ENCODE measurements at regions of chr17 and their contacts with region 1.

Region 1: GRCh38 chr17:55527540-55528118 is 16.4 kb upstream of the SMIM36 start:
- DNase-seq: peak in 3 of 14 experiments; percentile 8 to 15 (median 15)
- ATAC-seq: no peak
- H3K4me3 ChIP-seq: no peak overlapping the region
- H3K4me3 Mint-ChIP-seq: no peak overlapping the region
- H3K27ac ChIP-seq: no peak overlapping the region
- H3K27ac Mint-ChIP-seq: no peak overlapping the region
- H3K4me1 ChIP-seq: no peaks in the 10 kb centered on the region
- H3K4me1 Mint-ChIP-seq: no peaks in the 10 kb centered on the region
- H3K27me3 ChIP-seq: no peaks in the 10 kb centered on the region
- H3K27me3 Mint-ChIP-seq: peaks cover 5% of the 10 kb centered on the region
- CTCF ChIP-seq: no peak

Region 2: GRCh38 chr17:55433629-55434305 is 93.9 kb before region 1 on chr17:
- CTCF ChIA-PET with region 1: no interaction called
- POLR2A ChIA-PET with region 1: no interaction called
- intact Hi-C with region 1: no loop called
- DNase-seq: no peak
- ATAC-seq: no peak
- H3K4me3 ChIP-seq: no peak overlapping the region
- H3K4me3 Mint-ChIP-seq: no peak overlapping the region
- H3K27ac ChIP-seq: no peak overlapping the region
- H3K27ac Mint-ChIP-seq: no peak overlapping the region
- H3K4me1 ChIP-seq: peaks cover 3% of the 10 kb centered on the region
- H3K4me1 Mint-ChIP-seq: peaks cover 11% of the 10 kb centered on the region
- H3K27me3 ChIP-seq: no peaks in the 10 kb centered on the region
- H3K27me3 Mint-ChIP-seq: no peaks in the 10 kb centered on the region
- CTCF ChIP-seq: no peak

Region 3: GRCh38 chr17:55564081-55564480 is 36.5 kb after region 1 on chr17:
- CTCF ChIA-PET with region 1: no interaction called
- POLR2A ChIA-PET with region 1: no interaction called
- intact Hi-C with region 1: no loop called
- DNase-seq: no peak
- ATAC-seq: no peak
- H3K4me3 ChIP-seq: no peak overlapping the region
- H3K4me3 Mint-ChIP-seq: no peak overlapping the region
- H3K27ac ChIP-seq: no peak overlapping the region
- H3K27ac Mint-ChIP-seq: no peak overlapping the region
- H3K4me1 ChIP-seq: no peaks in the 10 kb centered on the region
- H3K4me1 Mint-ChIP-seq: no peaks in the 10 kb centered on the region
- H3K27me3 ChIP-seq: no peaks in the 10 kb centered on the region
- H3K27me3 Mint-ChIP-seq: peaks cover 13% of the 10 kb centered on the region
- CTCF ChIP-seq: no peak

Region 4: DNA sequence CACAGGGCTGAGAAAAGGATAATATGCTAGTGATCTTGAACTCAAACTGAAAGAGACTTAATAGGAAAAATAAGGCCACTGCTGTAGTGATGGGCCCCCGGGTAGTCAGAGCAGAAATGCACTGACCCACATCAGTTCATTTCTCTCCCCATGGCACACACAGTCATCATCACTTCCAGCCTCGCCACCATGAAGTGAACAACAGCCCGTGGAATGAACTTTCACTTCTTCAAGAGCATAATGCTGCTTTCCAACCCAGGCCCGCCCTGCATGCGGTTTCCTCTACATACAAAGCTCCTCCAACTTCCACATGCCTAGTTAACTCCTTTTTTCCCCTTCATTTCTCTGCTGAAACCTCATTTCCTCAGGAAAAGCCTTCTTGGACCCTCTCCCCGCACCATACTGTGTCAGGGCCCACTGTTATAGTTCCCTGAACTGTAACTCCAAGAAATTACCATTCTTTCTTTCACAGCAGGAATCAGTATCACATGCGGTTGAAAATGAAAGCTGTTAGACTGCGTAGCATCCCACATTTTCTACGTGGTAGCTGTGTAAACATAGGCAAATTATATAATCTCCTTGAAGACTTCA is 49.5 kb after region 1 on chr17:
- CTCF ChIA-PET with region 1: interaction called, 5 read pairs
- POLR2A ChIA-PET with region 1: interaction called, 3 read pairs
- intact Hi-C with region 1: loop called in 1 of 2 experiments (anchors 10 kb)
- DNase-seq: peak; percentile 5 to 74 (median 32)
- ATAC-seq: peak; percentile 82
- H3K4me3 ChIP-seq: peak overlapping the region; percentile 56
- H3K4me3 Mint-ChIP-seq: no peak overlapping the region
- H3K27ac ChIP-seq: peak overlapping the region; percentile 42 to 71
- H3K27ac Mint-ChIP-seq: no peak overlapping the region
- H3K4me1 ChIP-seq: peaks cover 26% of the 10 kb centered on the region
- H3K4me1 Mint-ChIP-seq: peaks cover 6% of the 10 kb centered on the region
- H3K27me3 ChIP-seq: no peaks in the 10 kb centered on the region
- H3K27me3 Mint-ChIP-seq: no peaks in the 10 kb centered on the region
- CTCF ChIP-seq: no peak

Region 5: DNA sequence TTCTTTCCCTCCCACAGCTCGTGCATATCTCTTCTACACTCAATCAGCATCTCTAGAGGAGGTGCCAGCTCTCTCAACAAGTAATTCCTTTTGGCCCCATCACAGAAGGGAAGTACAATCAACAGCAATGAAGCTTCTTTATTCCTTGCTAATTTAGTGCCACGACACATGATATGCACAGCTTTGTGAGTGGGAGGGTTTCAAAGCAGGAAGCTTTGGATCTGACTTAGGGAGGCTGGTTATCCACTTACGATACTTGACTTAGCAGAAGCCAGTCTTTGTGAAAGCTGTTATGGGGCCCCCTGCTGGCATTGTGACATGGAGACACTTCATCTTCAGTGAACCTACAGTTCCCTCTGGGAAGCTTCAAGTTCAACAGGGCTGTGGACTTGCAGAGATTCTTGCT is 114.0 kb after region 1 on chr17:
- CTCF ChIA-PET with region 1: interaction called, 5 read pairs
- POLR2A ChIA-PET with region 1: no interaction called
- intact Hi-C with region 1: loop called in 1 of 2 experiments (anchors 5 kb)
- DNase-seq: peak in 10 of 14 experiments; percentile 1 to 54 (median 22)
- ATAC-seq: no peak
- H3K4me3 ChIP-seq: no peak overlapping the region
- H3K4me3 Mint-ChIP-seq: no peak overlapping the region
- H3K27ac ChIP-seq: no peak overlapping the region
- H3K27ac Mint-ChIP-seq: no peak overlapping the region
- H3K4me1 ChIP-seq: peaks cover 3% of the 10 kb centered on the region
- H3K4me1 Mint-ChIP-seq: no peaks in the 10 kb centered on the region
- H3K27me3 ChIP-seq: peaks cover 0 to 6% of the 10 kb centered on the region in 2 experiments
- H3K27me3 Mint-ChIP-seq: peaks cover 17% of the 10 kb centered on the region
- CTCF ChIP-seq: peak; percentile 35

Region 6: DNA sequence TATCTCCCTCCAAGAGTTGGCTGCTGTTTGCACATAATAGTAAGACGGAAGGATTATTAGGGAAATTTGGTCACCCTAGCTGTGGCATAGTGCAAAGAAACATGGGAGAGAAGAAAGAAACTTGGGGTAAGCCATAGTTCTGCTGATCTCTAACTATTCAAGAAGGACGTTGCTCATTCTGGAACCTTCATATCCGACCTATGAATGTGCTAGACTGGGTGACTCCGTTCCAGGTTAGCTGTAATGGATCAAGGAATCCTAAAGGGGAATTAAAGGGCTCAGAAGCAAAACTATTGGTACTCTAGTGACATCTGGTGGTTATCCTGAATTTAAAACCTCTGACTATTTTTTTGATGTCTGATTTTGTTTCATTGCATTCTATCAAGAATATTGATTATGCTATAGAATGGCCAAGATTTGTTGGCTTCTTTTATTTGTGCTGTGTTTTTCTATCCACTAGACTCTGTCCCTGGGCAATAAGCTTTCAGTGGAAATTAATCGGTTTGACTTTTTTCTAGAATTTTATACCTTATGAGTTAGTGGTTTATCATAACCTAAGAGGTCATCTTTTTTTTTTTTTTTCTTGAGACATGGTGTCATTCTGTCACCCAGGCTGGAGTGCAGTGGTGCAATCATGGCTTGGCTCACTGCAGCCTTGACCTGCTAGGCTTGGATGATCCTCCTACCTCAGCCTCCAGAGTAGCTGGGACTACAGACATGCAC is 242.7 kb after region 1 on chr17:
- CTCF ChIA-PET with region 1: interaction called, 7 read pairs
- POLR2A ChIA-PET with region 1: no interaction called
- intact Hi-C with region 1: loop called (anchors 1 to 2 kb)
- DNase-seq: peak in 2 of 14 experiments; percentile 16 to 28
- ATAC-seq: no peak
- H3K4me3 ChIP-seq: no peak overlapping the region
- H3K4me3 Mint-ChIP-seq: no peak overlapping the region
- H3K27ac ChIP-seq: no peak overlapping the region
- H3K27ac Mint-ChIP-seq: no peak overlapping the region
- H3K4me1 ChIP-seq: no peaks in the 10 kb centered on the region
- H3K4me1 Mint-ChIP-seq: no peaks in the 10 kb centered on the region
- H3K27me3 ChIP-seq: no peaks in the 10 kb centered on the region
- H3K27me3 Mint-ChIP-seq: no peaks in the 10 kb centered on the region
- CTCF ChIP-seq: no peak

Region 7: DNA sequence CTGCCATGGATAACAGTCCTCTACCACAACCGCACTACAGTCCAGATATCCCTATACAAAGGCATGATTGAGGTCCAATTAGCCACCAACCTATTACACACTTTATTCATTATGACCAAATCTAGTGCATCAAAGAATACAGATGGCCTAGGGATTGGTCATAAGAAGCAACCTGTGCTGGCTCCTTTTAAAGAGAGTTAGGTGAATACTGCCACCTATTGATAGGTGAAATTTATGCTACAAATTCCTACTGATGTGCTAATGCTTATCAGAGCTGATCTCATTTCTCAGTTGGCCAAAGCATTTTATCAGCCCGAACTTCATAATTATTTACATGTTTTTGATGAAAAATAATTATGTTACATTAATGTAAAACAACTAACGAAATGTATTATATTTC is 791.9 kb after region 1 on chr17:
- CTCF ChIA-PET with region 1: no interaction called
- POLR2A ChIA-PET with region 1: no interaction called
- intact Hi-C with region 1: loop called in 1 of 2 experiments (anchors 10 kb)
- DNase-seq: peak in 3 of 14 experiments; percentile 14 to 21 (median 16)
- ATAC-seq: no peak
- H3K4me3 ChIP-seq: no peak overlapping the region
- H3K4me3 Mint-ChIP-seq: no peak overlapping the region
- H3K27ac ChIP-seq: no peak overlapping the region
- H3K27ac Mint-ChIP-seq: no peak overlapping the region
- H3K4me1 ChIP-seq: no peaks in the 10 kb centered on the region
- H3K4me1 Mint-ChIP-seq: no peaks in the 10 kb centered on the region
- H3K27me3 ChIP-seq: no peaks in the 10 kb centered on the region
- H3K27me3 Mint-ChIP-seq: peaks cover 11% of the 10 kb centered on the region
- CTCF ChIP-seq: peak; percentile 21

Region 8: DNA sequence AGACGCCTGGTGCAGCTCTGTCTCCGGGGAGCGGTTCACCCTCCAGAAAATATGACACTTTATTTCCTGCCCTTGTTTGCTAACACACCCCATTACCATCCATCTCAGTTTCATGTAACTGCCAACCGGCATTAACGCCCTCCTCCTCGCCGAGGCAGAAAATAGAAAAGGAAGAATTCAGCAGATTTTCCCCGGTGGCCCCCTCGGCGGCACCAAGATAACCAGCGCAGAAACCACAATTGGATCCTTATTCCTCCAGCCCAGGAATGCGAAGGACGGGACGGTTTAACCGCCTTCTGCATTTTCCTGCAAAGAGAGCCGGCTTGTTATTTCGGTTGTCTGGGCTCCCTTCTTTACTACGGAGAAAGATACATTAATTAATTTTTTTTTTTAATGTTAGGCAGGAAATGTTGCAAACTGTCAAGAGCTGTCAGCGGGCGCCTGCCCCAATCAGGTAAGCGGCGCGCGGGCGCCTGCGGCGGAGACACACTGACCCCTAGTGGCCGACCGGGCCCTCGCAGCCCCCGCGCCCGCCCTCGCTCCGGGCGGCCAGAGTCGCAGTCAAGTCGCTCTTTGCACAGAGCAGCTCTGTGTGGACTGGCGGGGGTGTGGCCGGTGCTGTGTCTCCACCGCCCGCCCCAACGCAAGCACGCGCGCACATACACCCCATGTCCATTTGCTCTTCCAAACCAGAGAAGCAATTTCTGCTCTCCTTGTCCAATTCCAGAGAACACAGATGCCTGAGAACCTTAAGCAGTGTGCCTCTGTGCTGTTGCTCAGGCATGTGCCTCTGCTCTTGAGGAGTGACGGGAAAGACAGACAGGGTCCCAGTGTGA is 1252.5 kb after region 1 on chr17:
- CTCF ChIA-PET with region 1: interaction called, 7 read pairs
- POLR2A ChIA-PET with region 1: no interaction called
- intact Hi-C with region 1: loop called in 1 of 2 experiments (anchors 5 kb)
- DNase-seq: peak; percentile 75 to 93 (median 85)
- ATAC-seq: peak; percentile 95
- H3K4me3 ChIP-seq: peak overlapping the region; percentile 64
- H3K4me3 Mint-ChIP-seq: peak overlapping the region; percentile 90
- H3K27ac ChIP-seq: peak overlapping the region; percentile 71 to 77
- H3K27ac Mint-ChIP-seq: peak overlapping the region; percentile 97
- H3K4me1 ChIP-seq: peaks cover 22% of the 10 kb centered on the region
- H3K4me1 Mint-ChIP-seq: peaks cover 26% of the 10 kb centered on the region
- H3K27me3 ChIP-seq: no peaks in the 10 kb centered on the region
- H3K27me3 Mint-ChIP-seq: no peaks in the 10 kb centered on the region
- CTCF ChIP-seq: peak; percentile 97

Measured in CD4-positive, alpha-beta T cell (primary cell).